ENCODE measurements at regions of chr11 and their contacts with region 1.

Region 1: DNA sequence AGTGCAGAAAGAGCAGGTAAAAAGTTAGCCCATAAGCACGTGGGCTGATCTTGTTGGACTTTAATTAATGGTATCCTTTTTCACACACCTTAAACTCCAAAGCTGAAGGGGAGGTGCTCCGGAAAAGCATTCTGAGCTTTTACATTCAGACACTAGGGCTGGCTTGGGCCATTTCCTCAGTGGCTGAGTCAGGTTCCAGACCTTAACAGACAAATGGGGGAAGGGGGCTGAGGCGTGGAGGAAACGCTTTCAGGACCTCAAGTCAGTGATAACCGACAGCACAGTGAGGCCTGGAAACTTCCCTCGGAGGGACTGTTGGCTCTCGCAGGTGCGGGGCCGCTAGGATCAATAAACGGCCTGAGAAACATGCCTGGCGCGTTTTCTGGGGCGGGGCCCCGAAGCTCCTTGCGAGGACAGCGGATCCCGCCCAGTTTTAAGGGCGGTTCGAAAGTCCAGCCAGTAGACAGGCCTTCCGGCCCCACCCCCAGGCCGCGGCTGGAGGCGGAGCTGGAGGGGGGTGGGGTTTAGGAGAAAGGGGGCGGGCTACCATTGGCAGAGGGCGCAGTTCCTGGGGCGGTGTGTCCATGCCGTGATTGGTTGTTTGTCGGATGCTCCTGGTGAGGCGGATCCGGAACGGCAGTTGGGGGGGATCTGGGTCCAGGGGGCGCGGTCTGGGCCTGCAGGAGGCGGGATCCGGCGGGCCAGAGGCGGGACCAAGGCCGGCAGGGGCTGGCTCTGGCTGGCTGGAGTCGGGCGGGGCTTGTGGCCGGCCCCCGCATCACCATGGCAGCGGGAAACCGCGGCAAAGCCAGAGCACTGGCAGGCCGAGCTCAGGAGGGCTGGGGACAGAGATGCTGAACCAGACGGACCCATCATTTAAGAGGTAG is 8.0 kb downstream of the C11orf52 start:
- DNase-seq: peak; percentile 90 to 97 (median 96)
- ATAC-seq: peak; percentile 92
- H3K4me3 ChIP-seq: peak overlapping the region; percentile 66 to 79
- H3K4me3 Mint-ChIP-seq: peak overlapping the region; percentile 81
- H3K27ac ChIP-seq: peak overlapping the region; percentile 68 to 81
- H3K27ac Mint-ChIP-seq: peak overlapping the region; percentile 91
- H3K4me1 ChIP-seq: peaks cover 14% of the 10 kb centered on the region
- H3K4me1 Mint-ChIP-seq: peaks cover 17% of the 10 kb centered on the region
- H3K27me3 ChIP-seq: no peaks in the 10 kb centered on the region
- H3K27me3 Mint-ChIP-seq: no peaks in the 10 kb centered on the region
- CTCF ChIP-seq: no peak

Region 2: GRCh38 chr11:110295531-110296225 is 1631.1 kb before region 1 on chr11:
- CTCF ChIA-PET with region 1: no interaction called
- POLR2A ChIA-PET with region 1: no interaction called
- intact Hi-C with region 1: no loop called
- DNase-seq: peak in 8 of 9 experiments; percentile 13 to 73 (median 53)
- ATAC-seq: peak; percentile 58
- H3K4me3 ChIP-seq: peak overlapping the region; percentile 73 to 86
- H3K4me3 Mint-ChIP-seq: peak overlapping the region; percentile 90
- H3K27ac ChIP-seq: peak overlapping the region in 1 of 2 experiments; percentile 42
- H3K27ac Mint-ChIP-seq: peak overlapping the region; percentile 27
- H3K4me1 ChIP-seq: peaks cover 7% of the 10 kb centered on the region
- H3K4me1 Mint-ChIP-seq: peaks cover 27% of the 10 kb centered on the region
- H3K27me3 ChIP-seq: no peaks in the 10 kb centered on the region
- H3K27me3 Mint-ChIP-seq: no peaks in the 10 kb centered on the region
- CTCF ChIP-seq: no peak

Region 3: DNA sequence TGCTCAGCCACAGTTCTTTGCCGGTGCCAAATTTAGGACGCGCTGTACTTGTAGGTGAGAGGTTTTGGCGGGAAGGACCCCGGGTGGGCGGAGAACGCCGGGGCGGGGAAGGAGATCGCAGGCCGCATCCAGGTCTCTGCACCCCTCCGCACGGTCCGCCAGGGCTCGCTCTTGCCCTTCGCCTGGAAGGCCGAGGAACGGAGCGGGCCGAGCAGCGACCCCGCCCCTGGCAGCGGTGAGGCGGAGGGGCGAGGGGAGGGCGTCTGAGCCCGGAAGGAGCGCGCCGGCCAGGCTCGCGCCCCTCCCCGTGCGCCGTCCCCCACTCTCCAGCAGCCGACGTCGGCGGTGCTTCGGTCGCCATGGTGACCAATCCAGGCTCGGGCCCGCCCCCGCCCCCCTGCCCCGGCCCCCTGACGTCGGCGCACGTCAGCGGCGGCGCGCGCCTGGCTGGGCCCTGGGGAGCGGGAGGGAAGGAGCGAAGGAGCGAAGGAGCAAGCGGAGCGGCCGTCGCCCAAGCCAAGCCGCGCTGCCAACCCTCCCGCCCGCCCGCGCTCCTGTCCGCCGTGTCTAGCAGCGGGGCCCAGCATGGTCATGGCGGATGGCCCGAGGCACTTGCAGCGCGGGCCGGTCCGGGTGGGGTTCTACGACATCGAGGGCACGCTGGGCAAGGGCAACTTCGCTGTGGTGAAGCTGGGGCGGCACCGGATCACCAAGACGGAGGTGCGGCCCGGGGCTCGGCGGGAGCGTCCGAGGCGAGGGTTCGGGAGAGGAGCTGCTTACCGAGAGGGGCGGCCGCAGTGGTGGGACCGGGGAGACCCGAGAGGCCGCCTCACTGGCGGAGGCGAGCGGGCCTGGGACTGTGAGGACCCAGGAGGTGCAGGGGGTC is 324.5 kb before region 1 on chr11 and contains the start of gene SIK2:
- CTCF ChIA-PET with region 1: no interaction called
- POLR2A ChIA-PET with region 1: no interaction called
- intact Hi-C with region 1: loop called (anchors 1 to 2 kb)
- DNase-seq: peak; percentile 78 to 96 (median 90)
- ATAC-seq: peak; percentile 83
- H3K4me3 ChIP-seq: peak within 1 kb of the TSS; percentile 70 to 95
- H3K4me3 Mint-ChIP-seq: peak within 1 kb of the TSS; percentile 94
- H3K27ac ChIP-seq: peak within 1 kb of the TSS; percentile 77 to 94
- H3K27ac Mint-ChIP-seq: peak within 1 kb of the TSS; percentile 94
- H3K4me1 ChIP-seq: peaks cover 24% of the 10 kb centered on the region
- H3K4me1 Mint-ChIP-seq: peaks cover 27% of the 10 kb centered on the region
- H3K27me3 ChIP-seq: no peaks in the 10 kb centered on the region
- H3K27me3 Mint-ChIP-seq: no peaks in the 10 kb centered on the region
- CTCF ChIP-seq: peak; percentile 57
- total RNA-seq, gene SIK2: 2.9 to 3.2 TPM

Region 4: GRCh38 chr11:111870886-111871692 is 55.7 kb before region 1 on chr11 and contains the start of gene ALG9:
- CTCF ChIA-PET with region 1: interaction called, 5 read pairs
- POLR2A ChIA-PET with region 1: interaction called, 11 read pairs
- intact Hi-C with region 1: loop called in 1 of 2 experiments (anchors 1 kb)
- DNase-seq: peak; percentile 80 to 93 (median 89)
- ATAC-seq: peak; percentile 87
- H3K4me3 ChIP-seq: peak within 1 kb of the TSS; percentile 51 to 70
- H3K4me3 Mint-ChIP-seq: peak within 1 kb of the TSS; percentile 93
- H3K27ac ChIP-seq: peak within 1 kb of the TSS; percentile 76 to 77
- H3K27ac Mint-ChIP-seq: peak within 1 kb of the TSS; percentile 97
- H3K4me1 ChIP-seq: peaks cover 18% of the 10 kb centered on the region
- H3K4me1 Mint-ChIP-seq: peaks cover 34% of the 10 kb centered on the region
- H3K27me3 ChIP-seq: no peaks in the 10 kb centered on the region
- H3K27me3 Mint-ChIP-seq: no peaks in the 10 kb centered on the region
- CTCF ChIP-seq: peak; percentile 18
- total RNA-seq, gene ALG9: 35.5 to 36.9 TPM

Region 5: DNA sequence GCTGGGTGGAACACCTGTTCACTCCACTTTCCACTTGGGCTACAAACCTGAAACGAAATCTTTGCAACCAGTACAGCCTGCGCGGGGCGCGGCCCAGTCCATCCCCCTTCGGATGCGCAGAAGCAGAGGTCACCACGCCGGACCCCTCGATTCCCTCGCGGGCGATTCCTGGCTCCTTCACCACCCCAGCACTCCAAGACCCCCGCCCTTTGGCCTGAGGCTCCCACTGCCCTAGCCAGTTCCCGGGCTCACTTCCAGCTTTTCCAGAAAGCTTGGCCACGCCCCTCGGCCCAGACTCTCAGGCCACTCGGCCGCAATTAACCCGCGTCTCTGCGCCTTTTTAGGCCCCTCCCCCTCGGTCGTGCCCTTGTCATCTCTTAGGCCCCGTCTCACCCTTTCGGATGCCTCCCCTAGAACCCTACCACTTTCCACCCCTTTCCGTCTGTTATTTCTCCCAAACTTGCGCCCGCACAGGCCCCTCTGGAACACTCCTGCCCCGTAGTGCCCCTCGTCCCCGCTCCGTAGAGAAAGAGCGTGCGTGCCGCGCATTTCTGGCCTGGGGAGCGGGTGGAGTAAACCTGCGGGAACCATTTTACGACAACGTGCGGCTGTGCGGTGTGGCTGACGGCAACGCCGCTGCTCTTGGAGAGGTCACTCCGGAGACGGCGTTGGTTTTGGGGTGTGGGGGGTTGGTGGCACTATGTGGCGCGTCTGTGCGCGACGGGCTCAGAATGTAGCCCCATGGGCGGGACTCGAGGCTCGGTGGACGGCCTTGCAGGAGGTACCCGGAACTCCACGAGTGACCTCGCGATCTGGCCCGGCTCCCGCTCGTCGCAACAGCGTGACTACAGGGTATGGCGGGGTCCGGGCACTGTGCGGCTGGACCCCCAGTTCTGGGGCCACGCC is 98.3 kb after region 1 on chr11 and contains the start of gene DLAT:
- CTCF ChIA-PET with region 1: interaction called, 4 read pairs
- POLR2A ChIA-PET with region 1: interaction called, 3 read pairs
- intact Hi-C with region 1: loop called (anchors 2 kb)
- DNase-seq: peak; percentile 61 to 90 (median 84)
- ATAC-seq: peak; percentile 89
- H3K4me3 ChIP-seq: peak within 1 kb of the TSS; percentile 87 to 95
- H3K4me3 Mint-ChIP-seq: peak within 1 kb of the TSS; percentile 100
- H3K27ac ChIP-seq: peak within 1 kb of the TSS; percentile 68 to 78
- H3K27ac Mint-ChIP-seq: peak within 1 kb of the TSS; percentile 98
- H3K4me1 ChIP-seq: peaks cover 21% of the 10 kb centered on the region
- H3K4me1 Mint-ChIP-seq: peaks cover 27% of the 10 kb centered on the region
- H3K27me3 ChIP-seq: no peaks in the 10 kb centered on the region
- H3K27me3 Mint-ChIP-seq: no peaks in the 10 kb centered on the region
- CTCF ChIP-seq: no peak
- total RNA-seq, gene DLAT: 14.5 to 14.7 TPM

Region 6: GRCh38 chr11:112086422-112087191 is 159.9 kb after region 1 on chr11 and contains the starts of genes SDHD and TIMM8B:
- CTCF ChIA-PET with region 1: interaction called, 3 read pairs
- POLR2A ChIA-PET with region 1: interaction called, 10 read pairs
- intact Hi-C with region 1: loop called (anchors 1 to 2 kb)
- DNase-seq: peak; percentile 92 to 99 (median 95)
- ATAC-seq: peak; percentile 93
- H3K4me3 ChIP-seq: peak within 1 kb of the TSS; percentile 87 to 92
- H3K4me3 Mint-ChIP-seq: peak within 1 kb of the TSS; percentile 100
- H3K27ac ChIP-seq: peak within 1 kb of the TSS; percentile 81 to 82
- H3K27ac Mint-ChIP-seq: peak within 1 kb of the TSS; percentile 99
- H3K4me1 ChIP-seq: peaks cover 33% of the 10 kb centered on the region
- H3K4me1 Mint-ChIP-seq: peaks cover 56% of the 10 kb centered on the region
- H3K27me3 ChIP-seq: no peaks in the 10 kb centered on the region
- H3K27me3 Mint-ChIP-seq: no peaks in the 10 kb centered on the region
- CTCF ChIP-seq: no peak
- total RNA-seq, gene SDHD: 31.2 to 32.3 TPM
- total RNA-seq, gene TIMM8B: 10.5 to 10.7 TPM

Region 7: DNA sequence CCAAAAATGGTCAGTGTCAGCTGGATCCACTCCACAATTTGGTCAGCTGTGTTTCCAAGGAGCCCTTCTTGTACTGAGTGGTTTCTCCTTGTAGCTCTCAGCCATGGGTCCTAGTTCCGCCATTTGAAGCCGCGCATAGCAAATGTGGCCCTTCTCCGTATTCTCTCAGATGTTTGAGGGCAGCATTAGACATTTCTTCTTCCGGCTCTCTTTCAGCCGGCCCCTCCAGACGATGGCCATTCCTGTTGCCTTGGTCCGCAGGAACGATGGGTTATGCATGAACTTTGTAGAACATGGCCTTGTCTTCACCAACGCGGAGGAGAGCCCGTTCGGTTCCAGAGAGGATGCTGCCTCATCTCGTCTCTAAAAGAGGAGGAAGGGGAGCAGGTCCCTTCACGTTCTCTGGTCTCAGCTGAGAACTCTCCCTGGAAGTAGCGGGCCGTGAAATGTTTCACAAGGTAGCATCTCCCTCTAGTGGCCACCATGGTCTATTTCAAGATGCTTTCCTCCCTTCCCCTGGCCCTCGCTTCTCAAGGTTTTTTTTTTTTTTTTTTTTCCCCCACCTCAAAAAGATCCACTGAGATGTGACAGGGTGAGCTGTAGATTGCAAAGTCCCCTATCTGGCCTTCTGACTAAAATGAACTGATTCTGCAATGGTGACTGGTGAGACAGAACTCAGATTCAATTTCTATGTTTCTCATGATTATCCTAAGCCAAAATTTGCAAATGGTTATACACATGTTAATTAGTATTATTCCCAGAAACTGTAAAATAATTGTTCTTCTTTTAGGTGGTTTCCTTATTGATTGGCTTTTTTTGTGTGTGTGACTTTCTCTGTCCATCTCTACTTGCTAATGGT is 353.7 kb after region 1 on chr11:
- CTCF ChIA-PET with region 1: interaction called, 7 read pairs
- POLR2A ChIA-PET with region 1: no interaction called
- intact Hi-C with region 1: loop called (anchors 2 kb)
- DNase-seq: peak; percentile 24 to 90 (median 67)
- ATAC-seq: peak; percentile 93
- H3K4me3 ChIP-seq: peak overlapping the region; percentile 60 to 79
- H3K4me3 Mint-ChIP-seq: peak overlapping the region; percentile 92
- H3K27ac ChIP-seq: peak overlapping the region in 1 of 2 experiments; percentile 28
- H3K27ac Mint-ChIP-seq: peak overlapping the region; percentile 77
- H3K4me1 ChIP-seq: no peaks in the 10 kb centered on the region
- H3K4me1 Mint-ChIP-seq: peaks cover 8% of the 10 kb centered on the region
- H3K27me3 ChIP-seq: no peaks in the 10 kb centered on the region
- H3K27me3 Mint-ChIP-seq: no peaks in the 10 kb centered on the region
- CTCF ChIP-seq: peak; percentile 44

Region 8: GRCh38 chr11:113875234-113876073 is 1948.7 kb after region 1 on chr11 and contains the start of gene USP28:
- CTCF ChIA-PET with region 1: no interaction called
- POLR2A ChIA-PET with region 1: no interaction called
- intact Hi-C with region 1: loop called in 1 of 2 experiments (anchors 10 kb)
- DNase-seq: peak; percentile 45 to 90 (median 76)
- ATAC-seq: peak; percentile 85
- H3K4me3 ChIP-seq: peak within 1 kb of the TSS; percentile 80 to 95
- H3K4me3 Mint-ChIP-seq: peak within 1 kb of the TSS; percentile 96
- H3K27ac ChIP-seq: peak within 1 kb of the TSS; percentile 52 to 88
- H3K27ac Mint-ChIP-seq: peak within 1 kb of the TSS; percentile 97
- H3K4me1 ChIP-seq: peaks cover 11% of the 10 kb centered on the region
- H3K4me1 Mint-ChIP-seq: peaks cover 48% of the 10 kb centered on the region
- H3K27me3 ChIP-seq: no peaks in the 10 kb centered on the region
- H3K27me3 Mint-ChIP-seq: no peaks in the 10 kb centered on the region
- CTCF ChIP-seq: no peak
- total RNA-seq, gene USP28: 6.4 to 6.8 TPM

Measured in CD8-positive, alpha-beta T cell (primary cell).